ENCODE measurements at regions of chr16 and their contacts with region 1.

Region 1: DNA sequence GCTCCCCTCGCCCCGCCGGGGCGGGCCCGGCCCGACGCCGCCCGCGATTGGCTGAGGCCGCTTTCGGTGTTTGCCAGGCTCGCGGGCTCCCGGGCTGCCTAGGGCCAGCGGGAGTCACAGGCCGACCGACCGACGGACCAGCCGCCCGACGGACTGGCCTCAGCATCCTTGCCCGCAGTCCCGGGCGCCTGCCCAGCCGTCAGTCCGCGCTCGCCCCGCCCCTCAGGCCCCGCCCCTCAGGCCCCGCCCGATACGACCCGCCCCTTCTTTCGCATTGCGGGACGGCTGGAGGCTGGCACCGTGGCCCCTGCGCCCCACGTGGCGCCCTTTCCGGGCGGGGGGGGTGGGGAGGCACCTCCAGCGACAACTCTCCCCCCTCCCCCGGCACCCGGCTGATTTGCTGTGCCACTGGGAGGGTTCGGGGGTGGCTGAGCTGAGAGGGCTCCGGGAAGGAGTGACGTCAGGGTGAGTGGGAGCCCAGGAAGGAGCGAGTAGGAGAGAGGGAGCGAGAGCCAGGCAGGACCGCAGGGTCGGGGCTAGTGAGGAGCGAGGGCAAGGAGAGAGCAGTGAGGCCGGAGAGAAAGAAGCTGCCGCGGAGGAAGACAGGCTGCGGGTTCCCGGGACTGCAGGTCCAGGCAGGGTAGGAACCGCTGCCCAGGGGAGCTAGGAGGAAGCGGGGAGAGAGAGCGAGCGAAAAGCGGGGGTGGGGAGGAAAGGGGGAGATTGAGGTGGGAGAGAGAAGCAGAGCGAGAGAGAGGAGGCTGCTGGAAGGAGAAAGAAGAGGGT is at the start of gene ASPHD1:
- DNase-seq: peak; percentile 71
- ATAC-seq: peak; percentile 91
- H3K4me3 Mint-ChIP-seq: peak within 1 kb of the TSS; percentile 67
- H3K27ac Mint-ChIP-seq: no peak within 1 kb of the TSS
- H3K4me1 Mint-ChIP-seq: peaks cover 12% of the 10 kb centered on the region
- H3K27me3 Mint-ChIP-seq: peaks cover 22% of the 10 kb centered on the region
- CTCF ChIP-seq: no peak
- total RNA-seq, gene ASPHD1: 2.0 to 2.1 TPM

Region 2: DNA sequence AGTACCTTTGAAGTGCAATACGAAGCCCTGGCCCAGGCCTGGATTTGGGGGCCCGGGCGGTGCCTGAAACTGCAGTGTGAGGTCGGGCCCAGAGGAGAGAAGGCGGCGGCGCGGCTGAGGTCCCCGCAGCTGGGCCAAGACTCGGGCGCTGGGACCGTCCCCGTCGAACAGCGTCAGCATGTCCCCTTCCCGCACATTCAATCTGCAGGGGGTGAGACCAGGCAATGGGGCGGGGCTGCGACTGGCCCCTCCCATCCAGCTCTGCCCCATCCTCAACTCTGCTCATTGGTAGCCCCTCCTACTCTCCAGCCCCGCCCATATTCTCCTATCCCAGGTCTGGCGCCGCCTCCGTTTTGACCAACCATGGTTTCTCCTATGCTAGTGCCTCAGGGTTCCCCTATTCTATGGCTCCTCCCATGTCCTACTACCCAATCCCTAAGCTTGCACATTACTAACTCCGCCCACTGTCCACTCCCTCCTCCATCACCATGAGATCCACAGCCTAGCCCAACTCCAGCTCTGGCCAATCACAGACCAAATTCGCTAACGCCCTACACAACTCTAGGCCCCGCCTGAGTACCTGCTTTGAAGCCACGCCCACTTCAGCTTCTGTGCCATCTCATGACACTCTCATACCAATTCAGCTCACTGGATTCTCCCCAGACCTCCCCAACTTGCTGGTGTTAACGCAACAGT is 22.9 kb before region 1 on chr16:
- CTCF ChIA-PET with region 1: no interaction called
- POLR2A ChIA-PET with region 1: interaction called, 3 read pairs
- intact Hi-C with region 1: loop called (anchors 2 kb)
- DNase-seq: peak; percentile 81
- ATAC-seq: peak; percentile 89
- H3K4me3 Mint-ChIP-seq: peak overlapping the region; percentile 61
- H3K27ac Mint-ChIP-seq: no peak overlapping the region
- H3K4me1 Mint-ChIP-seq: peaks cover 16% of the 10 kb centered on the region
- H3K27me3 Mint-ChIP-seq: peaks cover 30% of the 10 kb centered on the region
- CTCF ChIP-seq: no peak